Spleen (tissue), 13 donors: ENCODE measurements at regions of chr1 and their contacts with region 1.

Region 1: GRCh38 chr1:94329986-94330385 is 88.2 kb upstream of the ABCD3 start:
- DNase-seq: no peak
- H3K4me3 ChIP-seq: no peak overlapping the region
- H3K27ac ChIP-seq: peak overlapping the region in 5 of 8 donors; percentile 5 to 59 (median 50)
- H3K4me1 ChIP-seq: peaks cover 0 to 54% (median 20%) of the 10 kb centered on the region in 6 donors
- H3K27me3 ChIP-seq: peaks cover 0 to 33% (median 0%) of the 10 kb centered on the region in 7 donors
- CTCF ChIP-seq: peak in 7 of 11 experiments; percentile 10 to 62 (median 48)
- POLR2A ChIP-seq: no peak

Region 2: GRCh38 chr1:94247138-94248094 is 82.6 kb before region 1 on chr1:
- intact Hi-C with region 1: loop called (anchors 10 kb)
- DNase-seq: peak; percentile 91
- H3K4me3 ChIP-seq: peak overlapping the region; percentile 32 to 80 (median 54)
- H3K27ac ChIP-seq: peak overlapping the region; percentile 59 to 93 (median 89)
- H3K4me1 ChIP-seq: peaks cover 0 to 21% (median 7%) of the 10 kb centered on the region in 6 donors
- H3K27me3 ChIP-seq: peaks cover 0 to 78% (median 25%) of the 10 kb centered on the region in 7 donors
- CTCF ChIP-seq: no peak
- POLR2A ChIP-seq: peak in 1 of 3 donors; percentile 76

Region 3: GRCh38 chr1:94408104-94408830 is 78.3 kb after region 1 on chr1:
- intact Hi-C with region 1: no loop called
- DNase-seq: no peak
- H3K4me3 ChIP-seq: no peak overlapping the region
- H3K27ac ChIP-seq: no peak overlapping the region
- H3K4me1 ChIP-seq: peaks cover 0 to 8% (median 0%) of the 10 kb centered on the region in 6 donors
- H3K27me3 ChIP-seq: no peaks in the 10 kb centered on the region
- CTCF ChIP-seq: no peak
- POLR2A ChIP-seq: no peak